Upper lobe of right lung (tissue), 1 donor: ENCODE measurements at regions of chr21 and their contacts with region 1.

Region 1: GRCh38 chr21:32403201-32403777 is 9.2 kb upstream of the EVA1C start:
- DNase-seq: no peak
- ATAC-seq: peak; percentile 96
- H3K4me3 ChIP-seq: no peak overlapping the region
- H3K27ac ChIP-seq: no peak overlapping the region
- H3K4me1 ChIP-seq: no peaks in the 10 kb centered on the region
- H3K27me3 ChIP-seq: no peaks in the 10 kb centered on the region
- CTCF ChIP-seq: peak; percentile 70

Region 2: DNA sequence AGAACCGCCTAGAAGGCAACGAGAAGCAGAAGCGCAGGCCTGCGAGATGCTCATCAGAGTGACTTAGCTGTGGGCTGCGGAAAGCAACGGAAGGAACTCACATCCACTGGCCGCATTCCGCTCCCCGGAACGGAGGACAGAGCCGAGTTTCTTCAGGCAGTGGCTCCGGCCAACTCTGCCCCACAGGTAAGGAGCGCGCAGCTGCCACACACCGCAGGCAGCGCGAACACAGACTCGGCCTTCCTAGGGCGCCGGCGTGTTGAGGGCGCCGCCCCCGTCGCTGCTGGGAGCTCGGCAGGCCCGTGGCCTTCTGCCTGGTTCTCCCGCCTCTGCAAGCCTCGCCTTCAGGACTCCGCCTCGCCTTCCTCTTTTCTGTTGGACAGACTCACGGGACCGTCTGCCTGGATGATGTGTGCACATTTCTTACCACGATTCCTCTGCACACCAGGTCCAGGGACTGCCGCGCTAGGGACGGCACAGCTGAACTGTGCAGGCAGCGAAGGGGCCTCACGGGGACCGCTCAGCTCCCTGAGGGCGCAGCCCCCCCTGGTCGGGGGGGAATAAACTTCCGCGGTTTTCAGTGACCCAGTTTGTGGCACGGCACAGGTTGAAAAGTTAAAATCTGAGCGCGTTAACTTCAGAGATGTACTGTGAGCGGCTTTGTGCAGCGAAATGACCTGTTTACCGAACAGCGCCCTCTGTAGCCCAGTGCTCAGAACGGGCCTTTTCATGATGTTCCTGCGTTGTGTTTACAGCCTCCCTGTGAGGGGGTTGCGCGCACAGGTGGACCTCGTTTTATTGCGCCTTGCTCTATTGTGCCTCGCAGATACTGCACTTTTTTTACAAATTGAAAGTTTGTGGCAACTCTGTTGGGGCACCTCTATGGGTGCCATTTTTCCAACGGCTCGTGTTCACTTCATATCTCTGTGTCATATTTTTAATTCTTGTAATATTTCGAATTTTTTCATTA is 166.3 kb after region 1 on chr21:
- intact Hi-C with region 1: loop called (anchors 10 kb)
- DNase-seq: peak; percentile 89
- ATAC-seq: peak; percentile 95
- H3K4me3 ChIP-seq: peak overlapping the region; percentile 61
- H3K27ac ChIP-seq: peak overlapping the region; percentile 65
- H3K4me1 ChIP-seq: peaks cover 7% of the 10 kb centered on the region
- H3K27me3 ChIP-seq: no peaks in the 10 kb centered on the region
- CTCF ChIP-seq: peak; percentile 85

Region 3: DNA sequence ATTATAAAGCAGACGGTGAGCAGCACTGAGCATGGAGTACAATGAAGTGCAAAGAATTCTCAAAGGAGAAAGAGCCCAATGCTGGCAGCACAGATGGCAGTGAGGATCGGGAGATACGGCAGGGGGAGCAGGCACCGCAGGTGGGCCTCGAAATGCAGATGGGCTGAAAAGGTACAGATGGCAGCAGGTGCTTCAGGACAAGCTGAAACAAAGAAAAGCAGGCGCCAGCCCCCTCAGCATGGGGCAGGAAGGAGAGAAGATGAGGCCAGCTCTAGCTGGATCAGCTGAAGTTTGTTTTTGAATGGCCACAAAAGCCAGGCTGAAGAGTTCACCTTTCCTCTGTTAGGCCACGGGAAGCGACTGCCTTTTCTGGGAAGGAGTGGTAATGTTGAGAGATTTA is 201.2 kb after region 1 on chr21:
- intact Hi-C with region 1: loop called (anchors 10 kb)
- DNase-seq: no peak
- ATAC-seq: no peak
- H3K4me3 ChIP-seq: no peak overlapping the region
- H3K27ac ChIP-seq: no peak overlapping the region
- H3K4me1 ChIP-seq: no peaks in the 10 kb centered on the region
- H3K27me3 ChIP-seq: no peaks in the 10 kb centered on the region
- CTCF ChIP-seq: no peak

Region 4: DNA sequence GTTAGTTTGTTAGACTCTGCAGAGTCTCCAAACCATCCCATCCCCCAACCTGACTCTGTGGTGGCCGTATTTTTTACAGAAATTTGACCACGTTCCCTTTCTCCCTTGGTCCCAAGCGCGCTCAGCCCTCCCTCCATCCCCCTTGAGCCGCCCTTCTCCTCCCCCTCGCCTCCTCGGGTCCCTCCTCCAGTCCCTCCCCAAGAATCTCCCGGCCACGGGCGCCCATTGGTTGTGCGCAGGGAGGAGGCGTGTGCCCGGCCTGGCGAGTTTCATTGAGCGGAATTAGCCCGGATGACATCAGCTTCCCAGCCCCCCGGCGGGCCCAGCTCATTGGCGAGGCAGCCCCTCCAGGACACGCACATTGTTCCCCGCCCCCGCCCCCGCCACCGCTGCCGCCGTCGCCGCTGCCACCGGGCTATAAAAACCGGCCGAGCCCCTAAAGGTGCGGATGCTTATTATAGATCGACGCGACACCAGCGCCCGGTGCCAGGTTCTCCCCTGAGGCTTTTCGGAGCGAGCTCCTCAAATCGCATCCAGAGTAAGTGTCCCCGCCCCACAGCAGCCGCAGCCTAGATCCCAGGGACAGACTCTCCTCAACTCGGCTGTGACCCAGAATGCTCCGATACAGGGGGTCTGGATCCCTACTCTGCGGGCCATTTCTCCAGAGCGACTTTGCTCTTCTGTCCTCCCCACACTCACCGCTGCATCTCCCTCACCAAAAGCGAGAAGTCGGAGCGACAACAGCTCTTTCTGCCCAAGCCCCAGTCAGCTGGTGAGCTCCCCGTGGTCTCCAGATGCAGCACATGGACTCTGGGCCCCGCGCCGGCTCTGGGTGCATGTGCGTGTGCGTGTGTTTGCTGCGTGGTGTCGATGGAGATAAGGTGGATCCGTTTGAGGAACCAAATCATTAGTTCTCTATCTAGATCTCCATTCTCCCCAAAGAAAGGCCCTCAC is 622.5 kb after region 1 on chr21 and contains the start of gene OLIG2:
- intact Hi-C with region 1: no loop called
- DNase-seq: no peak
- ATAC-seq: no peak
- H3K4me3 ChIP-seq: no peak within 1 kb of the TSS
- H3K27ac ChIP-seq: no peak within 1 kb of the TSS
- H3K4me1 ChIP-seq: peaks cover 30% of the 10 kb centered on the region
- H3K27me3 ChIP-seq: peaks cover 100% of the 10 kb centered on the region
- CTCF ChIP-seq: no peak
- total RNA-seq, gene OLIG2: not detected